GM18951 (cell line): ENCODE measurements at regions of chr1 and their contacts with region 1.

Region 1: GRCh38 chr1:224127925-224128819 is 14.3 kb downstream of the FBXO28 start:
- POLR2A ChIP-seq: no peak

Region 2: DNA sequence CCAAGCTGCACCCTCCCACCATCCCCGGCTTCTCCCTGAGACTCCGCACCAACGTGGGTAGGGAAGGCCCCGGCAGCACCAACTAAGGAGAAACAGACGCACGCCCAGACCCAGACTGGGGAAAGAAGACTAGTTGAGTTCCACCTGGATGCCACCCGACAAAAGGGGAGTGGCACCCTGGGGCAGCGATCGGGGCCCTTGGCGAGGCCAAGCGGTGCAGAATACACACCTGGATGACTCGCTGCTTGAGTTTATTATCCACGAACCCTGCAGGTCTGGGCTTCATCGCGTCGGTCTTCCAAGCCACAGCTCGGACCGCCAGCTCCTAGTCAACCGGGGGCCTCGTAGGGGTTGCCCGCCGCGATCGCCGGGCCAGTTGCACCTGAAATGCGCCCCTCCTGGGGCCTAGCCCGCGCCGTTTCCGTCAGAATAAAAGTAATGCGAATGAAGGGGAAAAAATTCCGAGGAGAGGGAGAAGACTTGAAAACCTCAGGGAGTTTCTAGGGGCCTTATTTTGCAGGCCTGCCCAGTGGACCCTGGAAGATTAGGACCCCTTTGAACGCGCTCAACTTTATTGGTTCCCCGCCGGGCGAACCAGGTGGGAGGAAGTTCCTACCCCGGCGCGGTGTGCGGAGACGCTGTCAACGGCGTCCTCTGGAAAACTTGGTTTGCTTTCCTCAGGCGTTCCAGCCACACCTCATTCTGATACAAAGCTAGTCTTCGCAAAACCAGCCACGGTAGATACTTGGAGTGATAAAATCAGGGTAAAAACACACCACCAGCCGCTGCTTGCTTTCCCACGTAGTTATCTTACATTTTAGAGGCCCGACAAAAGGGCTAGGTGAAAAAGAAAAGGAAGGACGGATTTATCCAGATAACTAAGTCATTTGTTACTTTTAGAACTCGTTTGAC is 201.9 kb after region 1 on chr1 and contains the start of gene NVL:
- in situ Hi-C with region 1: loop called (anchors 10 kb)
- POLR2A ChIP-seq: peak; percentile 78